ENCODE measurements at regions of chr18 and their contacts with region 1.

Region 1: GRCh38 chr18:616380-616995 is 19.7 kb downstream of the CLUL1 start:
- DNase-seq: peak in 6 of 42 donors; percentile 24 to 59 (median 36)

Region 2: GRCh38 chr18:293536-293935 is 323.0 kb before region 1 on chr18:
- intact Hi-C with region 1: loop called (anchors 5 kb)
- DNase-seq: no peak

Measured in head of caudate nucleus (tissue), 42 donors.